ENCODE measurements at regions of chr1 and their contacts with region 1.

Region 1: DNA sequence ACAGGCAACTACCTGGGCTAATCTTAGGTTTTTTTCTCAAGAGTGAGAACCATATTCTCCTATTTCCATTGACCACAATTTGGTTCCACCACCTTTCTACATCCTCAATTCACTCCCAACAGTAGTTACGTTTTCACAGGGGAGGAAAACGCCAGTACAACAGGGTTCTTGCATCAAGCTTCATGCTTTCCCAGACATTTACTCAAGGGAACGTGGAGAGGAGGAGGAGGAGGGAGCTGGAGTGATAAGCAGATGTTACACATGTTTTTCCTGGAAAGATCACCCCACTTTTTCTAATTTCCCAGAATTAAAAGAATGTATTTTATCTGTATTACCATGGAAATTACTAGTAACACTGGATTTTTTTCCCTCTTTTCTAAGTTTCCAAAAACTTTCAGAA is 58.3 kb downstream of the RGS5 start:
- ATAC-seq: no peak
- H3K4me3 ChIP-seq: no peak overlapping the region
- H3K27ac ChIP-seq: no peak overlapping the region
- H3K4me1 ChIP-seq: peaks cover 0 to 7% of the 10 kb centered on the region in 2 donors

Region 2: DNA sequence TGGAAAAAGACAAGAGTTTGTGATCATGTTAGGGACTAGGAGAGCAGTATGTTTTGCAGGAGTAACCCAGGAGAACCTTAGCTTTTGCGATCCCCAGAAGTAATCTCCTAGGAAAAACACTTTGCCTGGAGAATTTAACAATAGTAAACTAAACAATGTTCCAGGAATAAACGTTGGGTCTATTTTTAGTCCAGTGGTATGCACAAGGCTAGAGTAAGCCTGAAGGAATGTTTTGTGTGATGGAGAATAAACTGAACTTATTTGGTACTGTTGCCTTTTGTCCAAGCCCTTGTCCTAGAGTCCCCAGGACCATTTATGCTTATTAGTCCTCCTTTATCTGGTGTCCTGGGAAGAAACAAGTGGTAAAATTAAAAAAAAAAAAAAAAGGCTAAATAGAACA is 87.0 kb after region 1 on chr1:
- in situ Hi-C with region 1: loop called in 1 of 9 experiments (anchors 25 kb)
- ATAC-seq: peak in 4 of 8 experiments; percentile 20 to 82 (median 58)
- H3K4me3 ChIP-seq: no peak overlapping the region
- H3K27ac ChIP-seq: no peak overlapping the region
- H3K4me1 ChIP-seq: peaks cover 6 to 7% of the 10 kb centered on the region in 2 donors

Measured in motor neuron (in vitro differentiated cells).